K562 (cell line): ENCODE measurements at regions of chr10 and their contacts with region 1.

Region 1: DNA sequence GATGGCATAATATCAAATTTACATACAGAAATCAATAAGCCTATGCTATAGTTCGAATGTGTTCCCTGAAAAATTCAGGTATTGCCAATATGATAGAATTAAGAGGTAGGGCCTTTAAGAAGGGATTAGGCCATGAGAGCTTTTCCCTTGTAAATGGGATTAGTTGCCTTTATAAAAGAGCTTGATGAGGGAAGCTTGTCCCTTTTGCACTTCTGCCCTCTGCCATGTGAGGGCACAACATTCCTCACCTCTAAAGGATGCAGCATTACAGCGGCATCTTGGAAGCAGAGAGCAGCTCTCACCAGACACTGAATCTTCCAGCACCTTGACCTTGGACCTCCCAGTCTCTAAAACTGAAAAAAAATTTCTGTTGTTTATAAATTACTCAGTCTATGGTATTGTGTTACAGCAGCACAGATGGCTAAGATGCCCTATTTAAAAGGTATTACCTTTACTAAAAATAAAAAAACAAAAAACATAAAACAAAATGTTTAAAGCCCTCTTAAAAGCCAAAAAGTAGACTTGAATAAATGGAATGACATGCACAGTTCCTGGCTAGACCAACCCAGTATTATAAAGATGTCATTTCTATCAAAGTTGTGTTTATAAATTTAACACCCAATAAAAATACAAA is 909.6 kb downstream of the REEP3 start:
- DNase-seq: peak in 1 of 4 experiments; percentile 75
- ATAC-seq: peak; percentile 93
- H3K4me3 ChIP-seq: no peak overlapping the region
- H3K27ac ChIP-seq: no peak overlapping the region
- H3K4me1 ChIP-seq: no peaks in the 10 kb centered on the region
- H3K27me3 ChIP-seq: no peaks in the 10 kb centered on the region
- CTCF ChIP-seq: peak; percentile 45 to 74 (median 60)
- EP300 ChIP-seq: no peak
- POLR2A ChIP-seq: no peak
- RAD21 ChIP-seq: peak; percentile 76 to 82

Region 2: GRCh38 chr10:64648915-64649314 is 218.1 kb after region 1 on chr10:
- CTCF ChIA-PET with region 1: no interaction called
- POLR2A ChIA-PET with region 1: no interaction called
- in situ Hi-C with region 1: no loop called
- intact Hi-C with region 1: loop called (anchors 1 kb)
- DNase-seq: peak in 2 of 4 experiments; percentile 8 to 40
- ATAC-seq: peak; percentile 85
- H3K4me3 ChIP-seq: no peak overlapping the region
- H3K27ac ChIP-seq: no peak overlapping the region
- H3K4me1 ChIP-seq: no peaks in the 10 kb centered on the region
- H3K27me3 ChIP-seq: no peaks in the 10 kb centered on the region
- CTCF ChIP-seq: peak; percentile 22 to 42 (median 30); a peak in 3 of 6 replicates
- EP300 ChIP-seq: no peak
- POLR2A ChIP-seq: no peak
- RAD21 ChIP-seq: no peak

Region 3: DNA sequence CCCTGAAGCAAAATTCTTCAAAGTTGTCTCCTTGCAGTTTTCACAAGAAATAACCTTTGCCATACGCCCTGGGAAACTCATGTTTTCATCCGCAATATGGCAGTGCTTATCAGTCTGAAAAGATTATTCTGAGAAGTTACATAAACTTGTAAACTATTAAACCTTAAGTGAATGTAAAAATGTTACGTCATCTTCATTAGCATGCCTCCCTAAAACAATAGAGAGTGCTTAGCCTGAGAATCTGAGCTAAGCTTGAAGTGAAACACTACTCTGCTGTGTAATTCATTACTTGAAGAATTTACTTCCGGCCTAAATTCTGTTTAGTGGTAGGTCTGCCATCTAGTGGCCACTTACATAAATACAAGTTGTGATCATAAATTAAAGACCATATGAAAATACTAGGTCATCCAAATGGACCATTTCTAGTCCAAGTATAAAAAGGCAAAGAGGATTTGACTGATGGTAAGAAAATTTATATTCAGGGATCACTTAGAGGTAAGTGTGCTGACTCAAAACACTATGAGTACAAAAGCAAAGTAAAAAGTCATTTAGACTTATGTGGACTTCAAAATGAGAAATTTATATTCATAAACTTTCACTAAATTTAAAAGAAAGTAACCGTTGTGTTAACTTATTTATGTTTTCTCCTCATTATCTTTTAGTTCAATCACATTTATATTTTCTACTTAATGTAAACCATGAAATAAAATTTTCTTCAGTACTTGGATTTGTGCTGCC is 1749.9 kb after region 1 on chr10:
- CTCF ChIA-PET with region 1: no interaction called
- POLR2A ChIA-PET with region 1: no interaction called
- in situ Hi-C with region 1: no loop called
- intact Hi-C with region 1: loop called (anchors 10 kb)
- DNase-seq: peak; percentile 30 to 62 (median 46)
- ATAC-seq: peak; percentile 69; the same call in 2 of the 3 replicates
- H3K4me3 ChIP-seq: no peak overlapping the region
- H3K27ac ChIP-seq: no peak overlapping the region
- H3K4me1 ChIP-seq: no peaks in the 10 kb centered on the region
- H3K27me3 ChIP-seq: no peaks in the 10 kb centered on the region; a peak in 1 of 5 replicates
- CTCF ChIP-seq: peak; percentile 26 to 69 (median 51); a peak in 5 of 6 replicates
- EP300 ChIP-seq: no peak
- POLR2A ChIP-seq: no peak
- RAD21 ChIP-seq: peak; percentile 59 to 72